ENCODE measurements at regions of chr6 and their contacts with region 1.

Region 1: GRCh38 chr6:32127717-32128592 is at the start of gene ATF6B:
- DNase-seq: peak; percentile 98
- CTCF ChIP-seq: no peak

Region 2: DNA sequence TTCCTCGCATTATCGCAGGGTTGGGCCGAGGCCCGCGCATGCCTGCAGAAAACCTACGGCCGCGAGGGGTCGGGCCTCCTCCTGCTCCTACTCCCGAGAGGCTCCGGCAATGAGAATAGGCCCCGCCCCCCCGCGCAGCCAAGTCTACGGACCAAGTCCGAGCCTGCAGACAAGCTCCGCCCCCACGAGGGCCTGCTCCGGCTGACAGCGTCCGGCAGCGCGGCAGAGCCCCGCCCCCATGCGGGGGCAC is 67.6 kb after region 1 on chr6:
- CTCF ChIA-PET with region 1: interaction called, 11 read pairs
- POLR2A ChIA-PET with region 1: interaction called, 7 read pairs
- DNase-seq: peak; percentile 98
- CTCF ChIP-seq: peak; percentile 22